ENCODE measurements at regions of chr1 and their contacts with region 1.

Region 1: GRCh38 chr1:28456078-28456477 is 49.8 kb upstream of the RCC1 start:
- DNase-seq: no peak
- ATAC-seq: no peak
- H3K4me3 ChIP-seq: no peak overlapping the region
- H3K27ac ChIP-seq: peak overlapping the region; percentile 38
- H3K4me1 ChIP-seq: peaks cover 34% of the 10 kb centered on the region
- H3K27me3 ChIP-seq: no peaks in the 10 kb centered on the region
- CTCF ChIP-seq: no peak

Region 2: DNA sequence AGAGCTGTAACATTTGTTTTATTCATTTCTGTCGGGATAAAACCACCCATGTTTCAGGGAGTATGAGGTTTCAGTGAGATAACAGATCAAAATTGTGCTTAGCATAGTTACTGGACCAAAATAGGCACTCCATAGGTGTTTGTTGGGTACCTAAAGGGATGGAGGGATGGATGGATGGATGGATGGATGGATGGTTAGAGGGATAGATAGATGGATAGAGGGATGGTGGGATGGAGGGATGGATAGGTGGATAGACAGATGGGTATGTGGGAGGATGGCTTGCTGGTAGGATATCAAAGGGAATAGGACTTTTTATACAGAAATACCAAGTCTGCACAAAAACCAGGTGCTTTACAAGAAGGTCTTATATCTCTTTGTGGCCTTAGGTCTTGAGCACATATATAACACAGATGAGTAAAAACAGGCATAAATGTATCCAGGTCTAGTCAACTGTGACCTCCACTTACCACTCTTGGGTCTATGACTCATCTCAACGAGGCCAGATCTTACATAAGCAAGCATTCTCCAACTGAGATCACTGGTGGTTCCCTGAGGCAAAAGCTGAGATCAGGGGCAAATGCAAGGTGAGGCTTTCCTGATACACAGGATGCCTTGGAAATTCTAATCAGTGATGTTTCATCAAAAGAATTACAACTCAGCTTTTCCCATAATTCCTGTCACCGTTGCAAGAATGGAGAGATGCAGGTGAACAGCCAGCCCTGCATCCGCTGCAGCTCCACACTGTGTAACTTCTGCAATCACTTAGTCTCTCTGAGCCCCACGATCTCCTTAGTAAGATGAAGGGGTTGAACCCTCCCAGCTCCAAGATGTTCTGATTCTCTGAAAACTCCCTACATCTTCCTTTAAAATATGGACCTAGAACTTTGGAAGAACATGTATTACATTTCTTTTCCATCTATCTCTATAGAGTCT is 311.6 kb before region 1 on chr1:
- intact Hi-C with region 1: no loop called
- DNase-seq: no peak
- ATAC-seq: no peak
- H3K4me3 ChIP-seq: no peak overlapping the region
- H3K27ac ChIP-seq: no peak overlapping the region
- H3K4me1 ChIP-seq: no peaks in the 10 kb centered on the region
- H3K27me3 ChIP-seq: no peaks in the 10 kb centered on the region
- CTCF ChIP-seq: no peak

Region 3: GRCh38 chr1:28392027-28392652 is 63.9 kb before region 1 on chr1:
- intact Hi-C with region 1: no loop called
- DNase-seq: no peak
- ATAC-seq: peak in 2 of 4 donors; percentile 58 to 66
- H3K4me3 ChIP-seq: no peak overlapping the region
- H3K27ac ChIP-seq: no peak overlapping the region
- H3K4me1 ChIP-seq: no peaks in the 10 kb centered on the region
- H3K27me3 ChIP-seq: no peaks in the 10 kb centered on the region
- CTCF ChIP-seq: no peak

Region 4: GRCh38 chr1:28505406-28506187 is 49.5 kb after region 1 on chr1 and contains the start of gene RCC1:
- intact Hi-C with region 1: loop called in 1 of 2 experiments (anchors 2 kb)
- DNase-seq: peak; percentile 97 to 98
- ATAC-seq: peak; percentile 90 to 94 (median 92)
- H3K4me3 ChIP-seq: peak within 1 kb of the TSS; percentile 83
- H3K27ac ChIP-seq: peak within 1 kb of the TSS; percentile 88
- H3K4me1 ChIP-seq: peaks cover 39% of the 10 kb centered on the region
- H3K27me3 ChIP-seq: no peaks in the 10 kb centered on the region
- CTCF ChIP-seq: no peak
- total RNA-seq, gene RCC1: 7.0 to 20.8 (median 9.2) TPM